CD4-positive, alpha-beta T cell (primary cell): ENCODE measurements at regions of chr4 and their contacts with region 1.

Region 1: DNA sequence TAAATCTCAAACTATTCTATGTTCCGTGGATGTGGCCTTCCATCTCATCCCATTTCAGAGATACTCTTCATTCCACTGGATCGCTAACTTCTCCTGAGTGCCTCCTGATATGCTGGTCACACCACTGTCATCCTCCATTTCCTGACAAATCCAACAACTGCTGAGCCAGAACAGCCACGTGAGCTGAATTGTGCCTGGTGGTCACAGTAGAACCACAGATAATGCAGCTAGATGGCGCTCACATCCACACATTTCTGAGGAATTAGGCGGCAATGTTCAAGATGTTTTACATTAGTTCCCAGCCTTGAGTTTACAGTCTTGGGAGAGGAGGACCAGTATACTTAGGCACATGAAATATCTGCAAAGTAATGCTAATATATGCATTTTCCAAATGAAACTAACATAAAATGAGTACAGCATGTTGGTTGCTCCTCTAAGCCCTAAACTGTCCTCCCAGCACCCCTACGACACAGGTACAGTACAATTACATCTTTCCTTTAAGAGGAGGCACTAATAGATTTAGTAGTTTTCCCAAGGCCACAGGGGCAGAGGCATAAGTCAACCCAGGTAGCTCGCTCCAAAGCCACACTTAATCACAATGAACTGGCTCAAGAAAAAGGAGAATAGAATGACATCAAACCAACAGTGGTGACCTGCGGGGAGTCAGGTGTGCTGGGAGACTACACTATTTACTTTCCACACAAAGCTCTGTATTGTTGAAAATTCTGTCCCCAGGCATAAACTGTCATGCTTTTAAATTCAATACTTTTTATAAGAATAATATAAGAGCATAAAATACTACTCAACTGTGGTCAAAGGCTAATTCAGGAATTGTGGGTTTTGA is 134.2 kb downstream of the CHIC2 start:
- DNase-seq: peak; percentile 25 to 76 (median 38)
- ATAC-seq: no peak
- H3K4me3 ChIP-seq: no peak overlapping the region
- H3K4me3 Mint-ChIP-seq: no peak overlapping the region
- H3K27ac ChIP-seq: no peak overlapping the region
- H3K27ac Mint-ChIP-seq: no peak overlapping the region
- H3K4me1 ChIP-seq: no peaks in the 10 kb centered on the region
- H3K4me1 Mint-ChIP-seq: no peaks in the 10 kb centered on the region
- H3K27me3 ChIP-seq: peaks cover 0 to 3% of the 10 kb centered on the region in 2 experiments
- H3K27me3 Mint-ChIP-seq: peaks cover 11% of the 10 kb centered on the region
- CTCF ChIP-seq: peak; percentile 79

Region 2: DNA sequence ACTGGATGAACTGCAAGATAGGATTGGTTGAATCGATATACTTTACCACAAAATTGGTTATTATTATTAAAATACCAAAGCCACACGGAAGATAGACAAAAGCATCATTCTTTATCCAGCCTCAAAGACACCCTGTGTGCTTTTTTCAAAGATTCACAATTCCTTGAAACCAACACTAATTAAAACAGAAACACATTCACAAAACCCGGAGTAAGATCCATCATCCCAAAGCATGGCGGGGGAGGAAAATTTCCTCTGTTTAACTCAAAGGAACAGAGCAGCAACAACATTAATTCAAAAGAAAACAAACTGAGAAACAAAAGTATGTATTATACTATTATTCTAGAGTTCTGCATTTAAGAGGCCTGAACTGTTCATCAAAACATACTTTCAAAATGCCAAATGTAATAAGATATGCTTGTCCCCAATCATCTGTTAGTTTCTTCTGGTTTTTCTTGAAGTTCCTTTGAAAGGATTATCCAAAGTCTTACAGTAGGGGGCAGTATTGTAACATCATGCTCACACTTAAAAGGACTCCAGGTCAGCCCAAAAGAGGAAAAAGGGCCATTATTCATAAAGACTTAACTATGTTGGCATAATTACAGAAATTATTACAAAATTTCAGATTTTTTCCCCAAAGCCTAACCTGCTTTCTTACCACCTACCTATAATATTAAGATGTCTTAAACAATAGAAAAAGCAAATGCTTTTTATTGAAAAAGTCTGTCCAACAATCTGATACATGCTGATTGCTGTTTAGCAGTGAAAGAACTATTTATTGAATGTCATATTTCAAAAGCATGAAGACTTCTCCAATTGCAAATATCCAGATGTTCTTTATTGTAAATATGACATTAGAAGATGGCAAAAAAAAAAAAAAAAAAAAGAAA is 733.0 kb before region 1 on chr4:
- CTCF ChIA-PET with region 1: interaction called, 3 read pairs
- POLR2A ChIA-PET with region 1: no interaction called
- intact Hi-C with region 1: loop called in 1 of 2 experiments (anchors 5 kb)
- DNase-seq: peak in 3 of 14 experiments; percentile 64 to 72 (median 71)
- ATAC-seq: no peak
- H3K4me3 ChIP-seq: no peak overlapping the region
- H3K4me3 Mint-ChIP-seq: no peak overlapping the region
- H3K27ac ChIP-seq: no peak overlapping the region
- H3K27ac Mint-ChIP-seq: no peak overlapping the region
- H3K4me1 ChIP-seq: no peaks in the 10 kb centered on the region
- H3K4me1 Mint-ChIP-seq: no peaks in the 10 kb centered on the region
- H3K27me3 ChIP-seq: no peaks in the 10 kb centered on the region
- H3K27me3 Mint-ChIP-seq: no peaks in the 10 kb centered on the region
- CTCF ChIP-seq: peak; percentile 74

Region 3: GRCh38 chr4:53840643-53841042 is 89.5 kb before region 1 on chr4:
- CTCF ChIA-PET with region 1: no interaction called
- POLR2A ChIA-PET with region 1: no interaction called
- intact Hi-C with region 1: no loop called
- DNase-seq: no peak
- ATAC-seq: no peak
- H3K4me3 ChIP-seq: no peak overlapping the region
- H3K4me3 Mint-ChIP-seq: no peak overlapping the region
- H3K27ac ChIP-seq: no peak overlapping the region
- H3K27ac Mint-ChIP-seq: no peak overlapping the region
- H3K4me1 ChIP-seq: no peaks in the 10 kb centered on the region
- H3K4me1 Mint-ChIP-seq: no peaks in the 10 kb centered on the region
- H3K27me3 ChIP-seq: no peaks in the 10 kb centered on the region
- H3K27me3 Mint-ChIP-seq: peaks cover 5% of the 10 kb centered on the region
- CTCF ChIP-seq: no peak